ENCODE measurements at regions of chr13 and their contacts with region 1.

Region 1: GRCh38 chr13:73861136-73861535 is 273.1 kb downstream of the KLF12 start:
- DNase-seq: no peak
- H3K4me3 Mint-ChIP-seq: no peak overlapping the region
- H3K27ac Mint-ChIP-seq: peak overlapping the region; percentile 33
- H3K4me1 Mint-ChIP-seq: peaks cover 43% of the 10 kb centered on the region
- H3K27me3 Mint-ChIP-seq: no peaks in the 10 kb centered on the region

Region 2: GRCh38 chr13:73876323-73876722 is 15.2 kb after region 1 on chr13:
- CTCF ChIA-PET with region 1: interaction called, 5 read pairs
- intact Hi-C with region 1: loop called (anchors 2 kb)
- DNase-seq: no peak
- H3K4me3 Mint-ChIP-seq: no peak overlapping the region
- H3K27ac Mint-ChIP-seq: no peak overlapping the region
- H3K4me1 Mint-ChIP-seq: peaks cover 51% of the 10 kb centered on the region
- H3K27me3 Mint-ChIP-seq: no peaks in the 10 kb centered on the region

Measured in activated naive CD4-positive, alpha-beta T cell treated with anti-CD3 and anti-CD28 coated beads for 36 hours (primary cell).